GM12878 (cell line): ENCODE measurements at regions of chr7 and their contacts with region 1.

Region 1: GRCh38 chr7:108497082-108497725 is 28.7 kb downstream of the PNPLA8 start:
- DNase-seq: peak; percentile 24
- ATAC-seq: peak; percentile 80
- H3K4me3 ChIP-seq: no peak overlapping the region
- H3K27ac ChIP-seq: no peak overlapping the region
- H3K4me1 ChIP-seq: no peaks in the 10 kb centered on the region
- H3K27me3 ChIP-seq: no peaks in the 10 kb centered on the region
- CTCF ChIP-seq: peak; percentile 71 to 79 (median 73); a peak in 5 of 6 replicates
- EP300 ChIP-seq: no peak
- POLR2A ChIP-seq: no peak
- RAD21 ChIP-seq: peak; percentile 85

Region 2: GRCh38 chr7:108114117-108114841 is 382.9 kb before region 1 on chr7:
- CTCF ChIA-PET with region 1: interaction called, 18 read pairs
- POLR2A ChIA-PET with region 1: no interaction called
- RAD21 ChIA-PET with region 1: interaction called, 4 read pairs
- SMC1A ChIA-PET with region 1: interaction called, 4 read pairs
- in situ Hi-C with region 1: no loop called
- intact Hi-C with region 1: no loop called
- DNase-seq: no peak
- ATAC-seq: peak; percentile 95
- H3K4me3 ChIP-seq: no peak overlapping the region
- H3K27ac ChIP-seq: no peak overlapping the region
- H3K4me1 ChIP-seq: no peaks in the 10 kb centered on the region
- H3K27me3 ChIP-seq: no peaks in the 10 kb centered on the region
- CTCF ChIP-seq: peak; percentile 68 to 80 (median 70)
- EP300 ChIP-seq: no peak
- POLR2A ChIP-seq: no peak
- RAD21 ChIP-seq: peak; percentile 94

Region 3: GRCh38 chr7:108181073-108181985 is 315.9 kb before region 1 on chr7:
- CTCF ChIA-PET with region 1: interaction called, 60 read pairs
- POLR2A ChIA-PET with region 1: no interaction called
- RAD21 ChIA-PET with region 1: interaction called, 33 read pairs
- SMC1A ChIA-PET with region 1: interaction called, 52 read pairs
- in situ Hi-C with region 1: loop called (anchors 5 kb)
- intact Hi-C with region 1: loop called (anchors 1 kb)
- DNase-seq: peak; percentile 28
- ATAC-seq: peak; percentile 82
- H3K4me3 ChIP-seq: no peak overlapping the region
- H3K27ac ChIP-seq: no peak overlapping the region
- H3K4me1 ChIP-seq: no peaks in the 10 kb centered on the region
- H3K27me3 ChIP-seq: no peaks in the 10 kb centered on the region
- CTCF ChIP-seq: peak; percentile 48 to 74 (median 62); a peak in 5 of 6 replicates
- EP300 ChIP-seq: no peak
- POLR2A ChIP-seq: no peak
- RAD21 ChIP-seq: peak; percentile 85

Region 4: DNA sequence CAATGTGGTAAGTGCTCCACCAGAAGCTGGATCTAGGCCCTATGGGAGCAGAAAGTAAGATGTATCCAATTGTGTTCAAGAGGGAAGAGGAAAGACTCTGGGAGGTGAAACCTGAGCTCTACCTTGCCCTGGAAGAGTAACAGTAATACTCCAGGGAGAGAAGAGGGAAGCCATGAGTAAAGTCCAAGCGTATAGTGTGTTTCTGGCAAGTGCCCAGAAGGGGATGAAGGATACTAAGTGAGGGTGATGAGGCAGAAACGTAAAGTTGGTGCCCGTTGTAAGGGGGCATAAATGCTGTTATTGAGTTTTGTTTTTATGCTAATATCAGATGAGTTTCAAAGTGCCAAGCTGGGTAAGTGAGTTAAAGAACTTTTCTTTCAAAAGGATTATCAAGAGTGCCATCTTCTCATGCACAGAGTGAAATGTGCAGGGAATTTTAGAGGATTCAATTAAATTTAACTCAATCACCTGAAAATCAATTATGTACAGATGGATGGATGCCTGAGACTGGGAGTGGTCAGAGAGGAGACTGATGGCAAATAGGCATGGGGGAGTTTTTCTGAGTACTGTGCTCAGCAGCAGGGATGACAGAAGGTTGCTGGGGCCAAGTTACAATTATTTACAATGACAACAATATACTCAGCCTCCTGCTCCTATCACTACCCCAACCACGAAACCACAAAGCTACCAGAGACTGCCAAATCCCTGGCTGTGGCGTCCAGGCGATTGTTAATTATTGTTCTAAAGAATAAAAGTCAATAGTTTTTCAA is 243.7 kb before region 1 on chr7:
- CTCF ChIA-PET with region 1: no interaction called
- POLR2A ChIA-PET with region 1: no interaction called
- RAD21 ChIA-PET with region 1: no interaction called
- SMC1A ChIA-PET with region 1: no interaction called
- in situ Hi-C with region 1: no loop called
- intact Hi-C with region 1: no loop called
- DNase-seq: no peak
- ATAC-seq: no peak
- H3K4me3 ChIP-seq: no peak overlapping the region
- H3K27ac ChIP-seq: no peak overlapping the region
- H3K4me1 ChIP-seq: no peaks in the 10 kb centered on the region
- H3K27me3 ChIP-seq: no peaks in the 10 kb centered on the region
- CTCF ChIP-seq: no peak
- EP300 ChIP-seq: no peak
- POLR2A ChIP-seq: no peak
- RAD21 ChIP-seq: no peak

Region 5: GRCh38 chr7:108452722-108453121 is 44.5 kb before region 1 on chr7:
- CTCF ChIA-PET with region 1: interaction called, 28 read pairs
- POLR2A ChIA-PET with region 1: interaction called, 3 read pairs
- RAD21 ChIA-PET with region 1: interaction called, 8 read pairs
- SMC1A ChIA-PET with region 1: interaction called, 16 read pairs
- in situ Hi-C with region 1: no loop called
- intact Hi-C with region 1: loop called (anchors 2 kb)
- DNase-seq: no peak
- ATAC-seq: peak; percentile 65
- H3K4me3 ChIP-seq: no peak overlapping the region
- H3K27ac ChIP-seq: no peak overlapping the region
- H3K4me1 ChIP-seq: no peaks in the 10 kb centered on the region
- H3K27me3 ChIP-seq: peaks cover 13 to 14% of the 10 kb centered on the region in 2 experiments
- CTCF ChIP-seq: peak; percentile 47 to 61 (median 57); a peak in 5 of 6 replicates
- EP300 ChIP-seq: no peak
- POLR2A ChIP-seq: no peak
- RAD21 ChIP-seq: peak; percentile 56

Region 6: DNA sequence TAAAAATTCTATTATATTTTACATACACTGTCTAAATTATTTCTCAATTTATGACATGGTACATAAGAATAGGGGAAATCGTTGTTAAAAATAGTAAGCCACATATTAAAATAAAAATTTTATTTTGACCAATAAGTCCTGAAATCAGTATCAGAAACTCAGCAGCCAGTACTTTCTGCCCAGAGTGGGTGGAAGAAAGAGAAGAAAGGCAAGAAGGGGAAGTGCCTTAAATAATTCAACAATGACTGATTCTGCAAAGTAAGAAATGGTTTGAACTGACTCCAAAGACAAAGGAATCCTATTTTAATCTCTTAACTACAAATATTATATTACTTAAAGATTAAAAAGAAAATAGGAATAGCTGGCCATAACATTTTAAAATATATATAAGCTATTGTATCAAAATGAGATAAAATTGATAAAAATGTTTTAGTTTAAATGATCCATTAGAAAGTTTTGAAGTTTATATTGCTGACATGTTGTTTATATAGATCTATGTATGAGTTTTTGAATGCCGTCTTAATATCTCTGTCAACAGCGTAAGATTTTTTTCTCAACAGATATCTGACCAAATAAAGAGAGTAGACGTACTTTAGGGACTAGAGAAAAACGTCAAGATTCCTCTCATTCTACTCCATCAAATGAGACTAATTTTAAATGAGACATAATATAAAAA is 10.8 kb before region 1 on chr7:
- CTCF ChIA-PET with region 1: interaction called, 48 read pairs
- POLR2A ChIA-PET with region 1: no interaction called
- RAD21 ChIA-PET with region 1: interaction called, 3 read pairs
- SMC1A ChIA-PET with region 1: interaction called, 7 read pairs
- in situ Hi-C with region 1: no loop called
- intact Hi-C with region 1: no loop called
- DNase-seq: no peak
- ATAC-seq: peak; percentile 34; the same call in 1 of the 3 replicates
- H3K4me3 ChIP-seq: no peak overlapping the region
- H3K27ac ChIP-seq: no peak overlapping the region
- H3K4me1 ChIP-seq: no peaks in the 10 kb centered on the region
- H3K27me3 ChIP-seq: no peaks in the 10 kb centered on the region
- CTCF ChIP-seq: no peak
- EP300 ChIP-seq: no peak
- POLR2A ChIP-seq: no peak
- RAD21 ChIP-seq: no peak

Region 7: GRCh38 chr7:108517951-108518350 is 20.7 kb after region 1 on chr7:
- CTCF ChIA-PET with region 1: interaction called, 27 read pairs
- POLR2A ChIA-PET with region 1: no interaction called
- RAD21 ChIA-PET with region 1: interaction called, 9 read pairs
- SMC1A ChIA-PET with region 1: interaction called, 8 read pairs
- in situ Hi-C with region 1: no loop called
- intact Hi-C with region 1: no loop called
- DNase-seq: no peak
- ATAC-seq: no peak
- H3K4me3 ChIP-seq: no peak overlapping the region
- H3K27ac ChIP-seq: no peak overlapping the region
- H3K4me1 ChIP-seq: no peaks in the 10 kb centered on the region
- H3K27me3 ChIP-seq: no peaks in the 10 kb centered on the region
- CTCF ChIP-seq: no peak
- EP300 ChIP-seq: no peak
- POLR2A ChIP-seq: no peak
- RAD21 ChIP-seq: no peak